ENCODE measurements at regions of chr10 and their contacts with region 1.

Region 1: DNA sequence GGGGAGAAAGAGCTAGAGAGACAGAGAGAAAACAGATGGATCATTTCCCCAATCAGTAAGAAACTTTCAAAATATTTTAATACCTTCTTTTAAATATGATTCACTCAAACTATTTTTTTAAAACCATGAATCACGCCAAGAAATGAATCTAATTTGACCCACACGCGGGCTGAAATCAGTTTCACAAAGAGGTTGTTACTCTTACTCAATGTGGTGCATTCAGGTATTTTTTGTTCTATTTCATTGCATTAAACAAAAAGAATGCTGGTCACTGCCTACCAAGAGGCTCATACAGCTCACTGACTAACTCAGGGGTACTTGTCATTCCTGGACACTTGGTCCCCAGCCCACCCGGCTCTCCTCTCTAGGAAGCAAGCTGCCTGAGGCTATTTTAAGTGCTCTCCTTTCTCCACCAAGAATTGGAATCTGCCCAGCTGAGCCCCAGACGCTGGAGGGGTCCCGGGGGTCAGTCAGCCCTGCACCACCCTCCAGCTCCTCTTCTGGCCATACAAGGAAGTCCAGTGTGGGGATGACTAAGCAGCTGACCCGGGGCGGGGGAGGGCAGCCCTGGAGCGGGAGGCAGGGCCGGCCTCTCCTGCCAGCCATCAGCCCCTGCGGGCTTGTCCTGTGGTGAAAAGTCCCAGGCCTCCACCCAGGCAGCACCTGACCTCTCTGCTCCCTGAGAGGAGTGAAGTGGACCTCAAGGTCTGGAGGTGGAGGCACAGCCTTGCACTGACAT is 21.7 kb upstream of the PFKP start:
- DNase-seq: peak; percentile 59 to 64
- H3K4me3 ChIP-seq: no peak overlapping the region
- H3K27ac ChIP-seq: peak overlapping the region in 4 of 5 donors; percentile 63 to 73 (median 66)
- H3K4me1 ChIP-seq: peaks cover 10 to 38% (median 22%) of the 10 kb centered on the region in 4 donors
- H3K27me3 ChIP-seq: no peaks in the 10 kb centered on the region
- CTCF ChIP-seq: peak in 1 of 7 experiments; percentile 15
- EP300 ChIP-seq: no peak
- POLR2A ChIP-seq: no peak

Region 2: GRCh38 chr10:2927958-2928840 is 117.4 kb before region 1 on chr10:
- intact Hi-C with region 1: loop called (anchors 5 kb)
- DNase-seq: peak; percentile 74 to 88
- H3K4me3 ChIP-seq: no peak overlapping the region
- H3K27ac ChIP-seq: no peak overlapping the region
- H3K4me1 ChIP-seq: peaks cover 0 to 7% (median 0%) of the 10 kb centered on the region in 4 donors
- H3K27me3 ChIP-seq: peaks cover 0 to 25% (median 4%) of the 10 kb centered on the region in 3 donors
- CTCF ChIP-seq: peak in 5 of 7 experiments; percentile 35 to 74 (median 57)
- EP300 ChIP-seq: no peak
- POLR2A ChIP-seq: no peak

Region 3: DNA sequence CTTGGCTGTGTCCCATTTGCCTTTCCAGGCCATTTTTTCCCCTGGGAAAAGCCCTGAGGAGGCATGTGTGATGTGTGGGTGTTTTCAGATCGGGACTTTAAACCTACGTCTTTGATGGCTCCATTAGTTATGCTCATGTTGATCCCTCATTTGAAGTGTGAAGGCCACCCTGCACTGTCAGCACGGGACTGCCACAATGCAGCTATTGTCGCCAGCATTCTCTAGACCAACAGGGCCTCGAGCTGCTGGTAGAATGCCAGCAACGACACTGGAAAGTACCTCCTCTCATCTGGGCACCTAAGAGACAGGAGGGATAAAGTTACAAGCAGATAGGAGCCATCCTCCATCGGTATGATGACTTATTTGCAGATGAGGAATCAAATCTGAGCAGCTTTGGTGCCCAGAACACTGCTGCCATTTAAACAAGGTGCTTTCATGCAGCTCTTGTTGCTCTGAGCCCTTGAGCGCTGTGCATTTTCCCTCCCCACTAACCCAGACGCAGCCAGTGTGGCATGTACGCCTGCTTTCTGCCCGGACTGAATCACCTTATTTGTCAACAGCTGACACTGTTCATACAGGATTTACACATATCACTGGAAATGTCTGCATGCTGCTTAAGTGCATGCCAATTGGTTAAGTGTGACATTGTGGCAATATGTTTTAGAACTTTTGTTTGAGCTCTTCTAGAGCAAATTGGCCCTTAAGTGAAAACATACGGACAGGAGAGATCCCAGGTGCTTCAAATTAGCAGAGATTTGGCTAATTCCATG is 302.0 kb after region 1 on chr10:
- intact Hi-C with region 1: no loop called
- DNase-seq: peak in 1 of 2 donors; percentile 30
- H3K4me3 ChIP-seq: no peak overlapping the region
- H3K27ac ChIP-seq: no peak overlapping the region
- H3K4me1 ChIP-seq: no peaks in the 10 kb centered on the region
- H3K27me3 ChIP-seq: peaks cover 0 to 19% (median 0%) of the 10 kb centered on the region in 3 donors
- CTCF ChIP-seq: no peak
- EP300 ChIP-seq: no peak
- POLR2A ChIP-seq: no peak